ENCODE measurements at regions of chr3 and their contacts with region 1.

Region 1: GRCh38 chr3:132253262-132253878 is 63.8 kb upstream of the ACP3 start:
- DNase-seq: peak in 2 of 6 donors; percentile 19 to 43
- ATAC-seq: peak in 3 of 4 donors; percentile 75 to 88 (median 85)
- H3K4me3 ChIP-seq: no peak overlapping the region
- H3K27ac ChIP-seq: no peak overlapping the region
- H3K4me1 ChIP-seq: peaks cover 0 to 3% (median 0%) of the 10 kb centered on the region in 3 donors
- H3K27me3 ChIP-seq: no peaks in the 10 kb centered on the region
- CTCF ChIP-seq: peak; percentile 31 to 65 (median 62)

Region 2: DNA sequence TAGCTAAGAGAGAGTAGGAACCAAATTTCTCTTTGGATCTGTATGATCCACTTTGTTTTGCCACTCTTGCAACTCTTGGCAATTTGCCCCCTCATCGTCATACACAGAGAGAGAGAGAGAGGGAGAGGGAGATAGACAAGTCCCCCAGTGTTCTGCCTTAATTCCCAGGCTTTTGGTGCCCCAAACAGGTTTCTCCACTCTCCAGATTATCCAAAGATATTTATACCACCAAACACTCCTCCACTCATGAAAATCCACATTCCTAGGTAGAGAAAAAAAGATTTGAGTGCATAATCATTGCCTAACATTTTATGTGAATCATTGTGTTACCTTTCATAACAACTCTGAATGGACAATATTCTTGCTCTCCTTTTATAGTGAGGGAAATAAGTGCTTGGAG is 79.1 kb after region 1 on chr3:
- intact Hi-C with region 1: loop called in 1 of 3 experiments (anchors 10 kb)
- DNase-seq: no peak
- ATAC-seq: peak in 1 of 4 donors; percentile 49
- H3K4me3 ChIP-seq: no peak overlapping the region
- H3K27ac ChIP-seq: no peak overlapping the region
- H3K4me1 ChIP-seq: peaks cover 0 to 3% (median 0%) of the 10 kb centered on the region in 3 donors
- H3K27me3 ChIP-seq: peaks cover 0 to 3% (median 0%) of the 10 kb centered on the region in 4 donors
- CTCF ChIP-seq: no peak

Region 3: DNA sequence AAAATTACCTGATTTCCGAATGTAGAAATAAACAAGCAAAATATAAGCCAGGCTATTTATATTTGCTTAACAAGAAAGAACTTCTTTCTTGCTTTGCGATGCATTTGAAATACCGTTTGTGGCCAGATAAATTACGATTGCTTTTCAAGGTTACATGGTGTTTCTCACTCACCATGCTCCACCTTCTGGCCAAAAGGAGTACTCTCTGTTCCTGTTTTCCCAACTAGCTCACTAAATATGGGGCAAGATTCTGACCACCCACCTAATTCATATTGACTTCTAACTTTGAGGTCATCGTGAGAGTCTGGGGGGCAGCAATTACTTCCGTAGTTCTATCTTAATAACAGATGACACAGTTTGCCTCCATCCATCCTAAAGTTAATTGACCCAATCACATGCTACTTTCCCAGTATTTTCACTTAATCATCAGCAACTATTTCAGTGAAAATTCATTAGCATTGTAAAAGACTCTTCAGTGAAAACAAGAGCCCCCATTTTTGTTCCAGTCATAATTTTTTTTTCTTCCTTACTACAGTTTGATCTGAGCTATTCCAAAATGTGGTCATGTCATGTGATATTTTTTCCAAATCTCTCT is 89.7 kb after region 1 on chr3:
- intact Hi-C with region 1: loop called (anchors 5 to 10 kb)
- DNase-seq: peak in 3 of 6 donors; percentile 26 to 57 (median 42)
- ATAC-seq: peak; percentile 80 to 92 (median 90)
- H3K4me3 ChIP-seq: no peak overlapping the region
- H3K27ac ChIP-seq: no peak overlapping the region
- H3K4me1 ChIP-seq: peaks cover 0 to 19% (median 0%) of the 10 kb centered on the region in 3 donors
- H3K27me3 ChIP-seq: no peaks in the 10 kb centered on the region
- CTCF ChIP-seq: peak; percentile 53 to 69 (median 60)

Region 4: GRCh38 chr3:132368962-132369361 is 115.6 kb after region 1 on chr3:
- intact Hi-C with region 1: no loop called
- DNase-seq: no peak
- ATAC-seq: no peak
- H3K4me3 ChIP-seq: no peak overlapping the region
- H3K27ac ChIP-seq: no peak overlapping the region
- H3K4me1 ChIP-seq: no peaks in the 10 kb centered on the region
- H3K27me3 ChIP-seq: no peaks in the 10 kb centered on the region
- CTCF ChIP-seq: no peak

Measured in pancreas (tissue), 10 donors.